Activated CD4-positive, alpha-beta T cell treated with anti-CD3 and anti-CD28 coated beads for 36 hours (primary cell): ENCODE measurements at regions of chr1 and their contacts with region 1.

Region 1: GRCh38 chr1:28172713-28173150 is 3.8 kb downstream of the PTAFR start:
- DNase-seq: peak; percentile 60
- ATAC-seq: peak; percentile 23
- H3K4me3 Mint-ChIP-seq: no peak overlapping the region
- H3K27ac Mint-ChIP-seq: no peak overlapping the region
- H3K4me1 Mint-ChIP-seq: peaks cover 50% of the 10 kb centered on the region
- H3K27me3 Mint-ChIP-seq: peaks cover 46% of the 10 kb centered on the region

Region 2: DNA sequence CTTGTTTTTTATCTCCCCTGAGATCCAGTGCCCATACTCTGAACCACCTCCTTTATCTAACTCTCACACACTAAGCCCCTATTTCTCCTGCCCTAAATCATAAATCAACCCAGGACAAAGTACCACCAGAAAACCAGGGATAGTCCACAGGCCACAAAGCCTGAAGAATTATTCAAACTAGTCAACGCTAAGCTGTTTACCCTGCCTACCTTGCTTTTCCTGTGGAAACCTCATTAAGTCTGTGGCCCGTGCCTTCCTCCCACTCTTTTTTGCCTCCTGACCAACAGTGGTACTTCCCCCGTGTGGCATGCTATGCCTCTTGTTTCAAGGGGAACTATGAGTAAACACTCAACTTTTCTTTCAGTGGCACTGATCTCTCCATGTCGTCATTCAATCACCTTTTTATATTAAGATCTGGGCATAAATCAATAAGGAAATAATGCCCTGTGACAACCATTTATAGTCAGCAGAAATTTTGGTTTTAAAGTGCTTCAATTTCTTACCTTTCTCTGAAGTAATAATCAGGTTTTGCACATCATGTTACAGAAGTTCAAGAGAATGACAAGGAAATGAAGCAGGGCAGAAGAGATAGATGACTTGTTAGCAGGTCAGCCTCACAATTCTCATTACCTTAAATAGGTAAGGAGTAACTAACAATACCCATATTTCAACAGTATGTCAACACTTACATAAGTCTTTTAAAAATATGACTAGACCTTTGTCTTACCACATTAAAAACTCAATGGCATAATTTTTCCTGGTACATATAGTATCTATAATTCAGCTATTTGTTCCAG is 116.4 kb before region 1 on chr1:
- CTCF ChIA-PET with region 1: no interaction called
- POLR2A ChIA-PET with region 1: no interaction called
- intact Hi-C with region 1: loop called in 1 of 2 experiments (anchors 1 kb)
- DNase-seq: peak; percentile 85
- ATAC-seq: peak; percentile 85
- H3K4me3 Mint-ChIP-seq: peak overlapping the region; percentile 1
- H3K27ac Mint-ChIP-seq: peak overlapping the region; percentile 83
- H3K4me1 Mint-ChIP-seq: peaks cover 47% of the 10 kb centered on the region
- H3K27me3 Mint-ChIP-seq: no peaks in the 10 kb centered on the region

Region 3: DNA sequence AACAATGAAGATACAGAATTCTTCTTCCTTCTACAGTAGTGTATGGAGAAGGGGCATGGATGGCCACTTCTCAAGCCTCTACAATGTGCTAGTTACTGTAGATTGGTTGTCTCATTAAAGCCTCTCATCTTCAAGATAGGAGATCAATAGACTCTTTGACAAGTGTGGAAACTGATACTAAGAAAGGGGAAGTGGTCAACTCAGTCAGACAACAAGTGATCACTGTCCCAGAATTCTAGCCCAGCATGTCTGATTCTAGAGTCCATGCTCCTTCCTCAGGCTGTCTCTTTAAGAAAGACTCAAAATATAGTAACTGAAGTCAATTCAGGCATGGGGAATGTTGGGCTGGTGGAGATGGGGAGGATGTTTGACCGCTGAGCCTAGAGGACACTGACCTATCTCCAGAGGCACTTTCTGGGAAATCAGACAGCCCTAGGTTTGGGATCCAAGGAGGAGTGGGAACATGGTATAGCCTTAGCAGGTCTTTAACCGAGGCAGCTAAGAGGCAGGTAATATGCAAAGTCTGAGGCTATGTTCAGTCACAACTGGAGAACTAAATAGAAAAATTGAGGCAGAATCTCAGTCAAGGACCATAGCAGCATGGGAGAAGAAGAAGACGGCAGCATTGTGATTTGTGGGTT is 45.0 kb before region 1 on chr1:
- CTCF ChIA-PET with region 1: no interaction called
- POLR2A ChIA-PET with region 1: interaction called, 8 read pairs
- intact Hi-C with region 1: loop called in 1 of 2 experiments (anchors 5 kb)
- DNase-seq: no peak
- ATAC-seq: no peak
- H3K4me3 Mint-ChIP-seq: no peak overlapping the region
- H3K27ac Mint-ChIP-seq: no peak overlapping the region
- H3K4me1 Mint-ChIP-seq: no peaks in the 10 kb centered on the region
- H3K27me3 Mint-ChIP-seq: peaks cover 18% of the 10 kb centered on the region

Region 4: GRCh38 chr1:28199328-28200233 is 26.8 kb after region 1 on chr1:
- CTCF ChIA-PET with region 1: no interaction called
- POLR2A ChIA-PET with region 1: interaction called, 4 read pairs
- intact Hi-C with region 1: loop called (anchors 1 kb)
- DNase-seq: peak; percentile 84
- ATAC-seq: peak; percentile 92
- H3K4me3 Mint-ChIP-seq: peak overlapping the region; percentile 37
- H3K27ac Mint-ChIP-seq: peak overlapping the region; percentile 89
- H3K4me1 Mint-ChIP-seq: peaks cover 47% of the 10 kb centered on the region
- H3K27me3 Mint-ChIP-seq: no peaks in the 10 kb centered on the region